Posterior vena cava (tissue), 2 donors: ENCODE measurements at regions of chr5 and their contacts with region 1.

Region 1: DNA sequence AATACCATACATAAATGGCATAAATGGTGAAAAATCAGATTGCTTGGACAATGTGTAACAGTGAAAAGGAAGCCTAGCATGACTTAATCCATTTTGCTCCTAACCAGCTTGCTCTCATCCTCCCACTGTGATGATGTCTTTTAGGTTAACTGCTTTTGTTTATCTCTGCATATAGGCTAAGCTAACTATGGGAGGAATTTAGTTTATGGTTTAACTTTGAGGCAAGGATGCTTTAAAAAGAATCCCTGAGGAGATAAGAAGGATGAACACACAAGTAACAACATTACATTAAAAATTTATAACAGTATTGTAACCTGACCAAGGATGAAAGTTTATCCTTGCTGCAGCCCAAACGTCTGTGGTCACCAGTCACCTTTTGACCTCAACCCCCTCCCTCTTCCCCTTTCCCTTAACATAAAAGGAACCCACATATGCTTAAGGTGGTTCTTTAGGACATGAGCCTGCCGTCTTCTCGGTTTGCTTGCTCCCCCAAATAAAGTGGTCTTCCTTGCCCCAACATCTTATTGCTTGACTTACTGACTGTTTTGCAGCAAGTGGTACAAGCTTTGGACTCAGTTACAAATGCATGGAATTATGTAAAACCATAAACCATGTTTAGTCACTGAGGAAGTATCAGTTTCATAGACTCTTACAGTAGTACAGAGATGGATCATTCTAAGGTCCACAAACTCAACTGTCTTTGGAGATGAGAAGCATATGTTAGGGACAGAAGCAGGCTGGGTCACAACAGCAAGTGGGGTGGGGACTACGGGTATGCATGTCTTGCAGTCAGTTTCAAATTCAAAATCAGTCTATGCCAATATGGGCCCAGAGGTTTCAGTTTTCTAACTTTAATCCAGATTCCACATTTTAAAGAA is 31.3 kb downstream of the AGXT2 start:
- DNase-seq: no peak

Region 2: DNA sequence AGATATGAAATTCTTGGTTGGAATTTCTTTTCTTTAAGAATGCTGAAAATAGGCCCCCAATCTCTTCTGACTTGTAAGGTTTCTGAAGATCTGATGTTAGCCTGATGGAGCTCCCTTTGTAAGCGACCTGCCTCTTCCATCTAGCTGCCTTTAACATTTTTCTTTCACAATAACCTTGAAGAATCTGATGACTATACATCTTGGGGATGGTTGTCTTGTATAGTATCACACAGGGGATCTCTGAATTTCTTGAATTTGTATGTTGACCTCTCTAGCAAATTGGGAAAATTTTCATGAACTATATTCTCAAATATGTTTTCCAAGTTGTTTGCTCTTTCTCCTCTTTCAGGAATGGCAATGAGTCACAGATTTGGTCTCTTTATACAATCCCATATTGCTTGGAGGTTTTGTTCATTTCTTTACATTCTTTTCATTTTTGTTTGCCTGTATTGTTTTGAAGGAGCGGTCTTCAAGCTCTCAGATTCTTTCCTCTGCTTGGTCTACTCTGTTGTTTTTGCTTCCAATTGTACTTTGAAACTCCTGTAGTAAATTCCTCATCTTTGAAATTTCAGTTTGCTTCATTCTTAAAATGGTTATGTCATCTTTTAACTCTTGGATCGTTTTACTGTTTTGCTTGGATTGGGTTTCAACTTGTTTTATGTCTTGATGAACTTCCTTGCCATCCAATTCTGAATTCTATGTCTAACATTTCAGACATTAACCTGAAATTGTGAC is 1820.8 kb before region 1 on chr5:
- intact Hi-C with region 1: loop called in 1 of 2 experiments (anchors 10 kb)
- DNase-seq: no peak

Region 3: DNA sequence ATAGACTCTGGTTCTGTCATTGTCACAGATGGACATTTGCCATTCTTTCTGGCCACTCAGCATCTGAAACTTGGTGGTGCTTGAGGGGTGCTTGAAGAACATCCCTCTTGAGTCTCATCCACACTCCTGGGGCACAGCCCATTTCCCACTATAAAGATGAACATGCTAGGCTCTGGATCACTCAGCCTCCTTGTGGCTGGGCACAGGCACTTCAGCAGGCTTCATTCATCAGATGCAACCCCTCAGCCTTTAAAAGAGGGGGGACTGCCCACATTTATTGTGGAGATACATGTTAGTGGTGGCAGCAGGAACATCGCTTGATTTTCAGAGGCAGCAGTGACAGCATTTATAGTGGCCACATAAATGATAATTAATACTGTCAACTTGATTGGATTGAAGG is 1735.5 kb after region 1 on chr5:
- intact Hi-C with region 1: no loop called
- DNase-seq: no peak